Activated B cell treated with CpG ODN at 0.5 μM for 24 hours (primary cell): ENCODE measurements at regions of chr12 and their contacts with region 1.

Region 1: DNA sequence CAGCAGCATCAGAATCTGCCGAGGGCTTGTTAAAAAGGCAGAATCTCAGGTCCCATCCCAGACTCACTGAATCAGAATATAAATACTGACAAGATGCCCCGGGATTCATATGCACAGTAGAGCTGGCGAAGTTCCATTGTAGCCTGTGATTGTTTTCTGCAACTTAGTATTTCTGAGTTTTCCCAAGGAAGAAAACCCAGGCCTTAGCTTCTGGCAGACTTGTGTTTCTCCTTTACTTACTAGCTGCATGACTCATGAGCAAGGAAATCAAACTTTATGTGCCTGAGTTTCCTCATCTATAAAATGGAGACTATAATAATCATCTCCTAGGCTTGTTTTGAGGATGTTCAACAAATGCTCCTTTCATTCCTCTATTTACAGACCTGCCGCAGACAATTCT is 278.5 kb upstream of the PLEKHG7 start:
- DNase-seq: no peak
- ATAC-seq: no peak
- H3K4me3 Mint-ChIP-seq: no peak overlapping the region
- H3K27ac Mint-ChIP-seq: peak overlapping the region; percentile 66
- H3K4me1 Mint-ChIP-seq: peaks cover 74% of the 10 kb centered on the region
- H3K27me3 Mint-ChIP-seq: no peaks in the 10 kb centered on the region
- CTCF ChIP-seq: no peak

Region 2: GRCh38 chr12:91974512-91975085 is 449.7 kb before region 1 on chr12:
- CTCF ChIA-PET with region 1: no interaction called
- POLR2A ChIA-PET with region 1: interaction called, 10 read pairs
- intact Hi-C with region 1: no loop called
- DNase-seq: no peak
- ATAC-seq: no peak
- H3K4me3 Mint-ChIP-seq: no peak overlapping the region
- H3K27ac Mint-ChIP-seq: no peak overlapping the region
- H3K4me1 Mint-ChIP-seq: no peaks in the 10 kb centered on the region
- H3K27me3 Mint-ChIP-seq: no peaks in the 10 kb centered on the region
- CTCF ChIP-seq: no peak